CD14-positive monocyte (primary cell): ENCODE measurements at regions of chr6 and their contacts with region 1.

Region 1: GRCh38 chr6:34986845-34987246 is 97.8 kb downstream of the ANKS1A start:
- DNase-seq: peak; percentile 47 to 63 (median 61)
- H3K4me3 ChIP-seq: no peak overlapping the region
- H3K4me3 Mint-ChIP-seq: no peak overlapping the region
- H3K27ac ChIP-seq: no peak overlapping the region
- H3K27ac Mint-ChIP-seq: peak overlapping the region in 1 of 7 donors; percentile 85
- H3K4me1 ChIP-seq: no peaks in the 10 kb centered on the region
- H3K4me1 Mint-ChIP-seq: no peaks in the 10 kb centered on the region
- H3K27me3 ChIP-seq: no peaks in the 10 kb centered on the region
- H3K27me3 Mint-ChIP-seq: peaks cover 0 to 2% (median 0%) of the 10 kb centered on the region in 3 donors
- CTCF ChIP-seq: peak; percentile 82

Region 2: DNA sequence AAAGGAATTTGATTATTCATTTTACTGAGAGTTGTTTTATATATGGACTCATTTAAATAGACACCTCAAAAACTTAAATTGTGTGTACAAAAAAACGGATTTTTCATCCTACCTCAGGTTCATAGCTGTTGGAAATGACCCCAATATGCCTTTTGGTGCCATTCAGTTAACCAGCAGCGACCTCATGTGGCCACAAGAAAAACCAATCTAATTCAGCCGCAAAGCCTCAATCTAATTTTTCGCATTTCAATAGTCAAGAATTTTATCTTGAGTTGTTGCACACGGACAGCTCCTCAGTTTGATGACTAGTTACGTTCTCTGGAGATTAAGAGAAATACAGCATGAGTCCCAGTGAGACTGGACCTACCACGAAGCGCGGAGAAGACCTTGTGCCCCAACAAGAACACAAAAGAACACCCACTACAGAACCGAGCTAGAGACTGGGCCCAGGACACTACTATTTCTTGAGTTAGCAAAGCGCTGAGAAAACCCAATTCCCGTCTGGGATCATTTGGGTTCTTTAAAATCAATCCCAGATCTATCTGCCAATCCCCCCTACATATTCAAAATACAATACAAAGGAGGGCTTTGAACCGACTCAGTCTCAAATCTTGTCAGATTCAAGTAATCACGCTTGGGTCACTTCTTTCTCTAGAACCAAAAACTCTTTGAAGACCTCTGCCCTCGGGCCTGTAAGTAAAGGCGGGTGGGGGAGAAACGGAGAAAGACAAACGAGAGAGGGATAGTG is 153.2 kb after region 1 on chr6:
- intact Hi-C with region 1: loop called (anchors 2 kb)
- DNase-seq: peak; percentile 25 to 53 (median 37)
- H3K4me3 ChIP-seq: no peak overlapping the region
- H3K4me3 Mint-ChIP-seq: peak overlapping the region in 1 of 2 donors; percentile 65
- H3K27ac ChIP-seq: no peak overlapping the region
- H3K27ac Mint-ChIP-seq: no peak overlapping the region
- H3K4me1 ChIP-seq: peaks cover 9 to 13% of the 10 kb centered on the region in 2 donors
- H3K4me1 Mint-ChIP-seq: peaks cover 21% of the 10 kb centered on the region
- H3K27me3 ChIP-seq: peaks cover 0 to 12% of the 10 kb centered on the region in 2 donors
- H3K27me3 Mint-ChIP-seq: peaks cover 9 to 17% (median 17%) of the 10 kb centered on the region in 3 donors
- CTCF ChIP-seq: peak; percentile 92

Region 3: DNA sequence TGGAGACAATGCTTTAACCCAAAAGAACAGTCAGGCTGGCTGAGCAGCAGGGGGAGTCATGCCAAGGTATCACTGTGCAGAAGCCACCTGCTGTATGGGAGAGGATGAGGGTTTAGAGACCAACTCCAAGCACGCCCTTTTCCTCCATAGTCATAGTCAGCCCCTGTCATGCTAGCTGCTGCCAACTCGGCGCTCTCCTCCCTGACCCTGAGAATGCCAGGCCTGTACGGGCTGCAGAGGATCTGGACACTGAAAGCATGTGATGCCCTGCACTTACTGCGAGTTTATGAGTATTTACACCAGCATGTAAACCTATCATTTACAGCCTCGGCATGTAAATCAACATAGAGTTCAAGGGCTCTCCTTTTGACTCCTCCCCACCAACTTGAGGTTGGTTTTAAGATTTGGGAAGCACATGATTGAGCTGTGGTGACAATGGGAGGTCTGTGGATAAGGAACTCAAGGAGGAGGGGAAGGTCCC is 215.3 kb after region 1 on chr6:
- intact Hi-C with region 1: loop called in 1 of 2 experiments (anchors 10 kb)
- DNase-seq: no peak
- H3K4me3 ChIP-seq: no peak overlapping the region
- H3K4me3 Mint-ChIP-seq: no peak overlapping the region
- H3K27ac ChIP-seq: no peak overlapping the region
- H3K27ac Mint-ChIP-seq: no peak overlapping the region
- H3K4me1 ChIP-seq: no peaks in the 10 kb centered on the region
- H3K4me1 Mint-ChIP-seq: no peaks in the 10 kb centered on the region
- H3K27me3 ChIP-seq: peaks cover 8 to 18% of the 10 kb centered on the region in 2 donors
- H3K27me3 Mint-ChIP-seq: peaks cover 15 to 26% (median 19%) of the 10 kb centered on the region in 3 donors
- CTCF ChIP-seq: no peak

Region 4: GRCh38 chr6:35240840-35241801 is 254.3 kb after region 1 on chr6:
- intact Hi-C with region 1: loop called (anchors 2 to 10 kb)
- DNase-seq: peak; percentile 38 to 54 (median 51)
- H3K4me3 ChIP-seq: no peak overlapping the region
- H3K4me3 Mint-ChIP-seq: no peak overlapping the region
- H3K27ac ChIP-seq: no peak overlapping the region
- H3K27ac Mint-ChIP-seq: no peak overlapping the region
- H3K4me1 ChIP-seq: peaks cover 0 to 4% of the 10 kb centered on the region in 2 donors
- H3K4me1 Mint-ChIP-seq: peaks cover 10% of the 10 kb centered on the region
- H3K27me3 ChIP-seq: no peaks in the 10 kb centered on the region
- H3K27me3 Mint-ChIP-seq: peaks cover 0 to 3% (median 2%) of the 10 kb centered on the region in 3 donors
- CTCF ChIP-seq: peak; percentile 97